ENCODE measurements at regions of chr2 and their contacts with region 1.

Region 1: DNA sequence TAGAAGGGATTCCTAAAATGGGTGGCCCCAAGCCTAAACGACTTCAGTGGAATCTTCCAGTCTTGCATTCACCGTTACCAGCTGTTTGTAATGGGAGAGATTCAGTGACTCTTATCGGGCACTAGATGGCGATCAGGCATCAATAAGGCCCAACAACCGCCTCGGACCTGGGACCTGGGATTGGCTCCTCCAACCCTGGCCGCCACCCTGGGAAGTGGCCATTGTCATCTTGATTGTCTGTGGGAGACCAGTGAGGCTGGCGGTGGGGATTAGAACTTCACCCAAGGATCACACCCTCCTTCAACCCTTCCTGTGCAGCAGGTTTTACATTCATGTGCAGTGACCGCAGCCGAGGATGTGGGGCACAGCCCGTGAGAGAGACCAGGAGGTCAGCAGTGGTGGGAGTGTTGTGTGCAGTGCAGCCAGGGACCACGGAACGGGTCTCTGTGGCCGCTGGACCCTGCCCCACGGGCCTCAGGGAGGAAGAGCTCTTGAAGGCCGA is 85.3 kb downstream of the SPP2 start:
- DNase-seq: peak; percentile 86 to 95 (median 87)
- H3K4me3 ChIP-seq: no peak overlapping the region
- H3K27ac ChIP-seq: no peak overlapping the region
- H3K4me1 ChIP-seq: peaks cover 0 to 3% (median 3%) of the 10 kb centered on the region in 3 donors
- H3K27me3 ChIP-seq: no peaks in the 10 kb centered on the region
- CTCF ChIP-seq: peak; percentile 84

Region 2: GRCh38 chr2:234038076-234038802 is 97.5 kb before region 1 on chr2:
- intact Hi-C with region 1: no loop called
- DNase-seq: no peak
- H3K4me3 ChIP-seq: no peak overlapping the region
- H3K27ac ChIP-seq: no peak overlapping the region
- H3K4me1 ChIP-seq: no peaks in the 10 kb centered on the region
- H3K27me3 ChIP-seq: no peaks in the 10 kb centered on the region
- CTCF ChIP-seq: no peak

Region 3: DNA sequence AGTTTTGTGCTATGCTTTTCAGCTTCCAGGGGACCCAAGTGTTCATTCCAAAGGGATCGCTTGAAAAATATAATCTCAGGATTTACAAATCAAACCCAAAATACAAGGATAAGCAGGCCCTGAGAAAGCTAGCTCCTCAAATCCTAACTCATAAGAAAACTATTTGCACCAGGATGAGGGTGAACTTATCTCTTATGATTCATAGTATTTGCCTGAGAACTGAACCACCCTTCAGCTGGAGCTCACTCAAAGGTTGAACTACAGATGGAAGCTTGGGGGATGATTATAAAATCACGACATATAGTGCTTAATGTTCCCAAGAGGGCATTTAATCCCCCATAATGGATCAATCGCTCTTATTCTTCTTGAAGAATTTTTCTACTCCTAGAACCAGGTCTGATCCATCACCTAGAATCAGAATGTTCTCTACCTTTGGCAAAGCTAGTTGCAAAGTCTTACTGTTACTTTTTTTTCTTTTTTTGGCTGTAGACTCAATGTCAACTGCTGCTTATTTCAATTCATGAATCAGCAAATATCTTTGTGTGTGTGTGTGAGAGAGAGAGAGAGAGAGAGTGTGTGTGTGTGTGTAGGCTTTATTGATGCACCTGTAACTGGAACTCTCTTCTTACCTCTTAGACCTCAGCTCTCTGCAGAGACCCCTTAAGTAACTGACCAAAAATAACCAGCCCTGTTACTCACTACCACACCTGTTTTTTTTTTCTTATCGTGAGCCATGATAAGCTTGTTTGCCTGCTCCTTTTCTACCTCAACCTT is 316.3 kb after region 1 on chr2:
- intact Hi-C with region 1: no loop called
- DNase-seq: no peak
- H3K4me3 ChIP-seq: no peak overlapping the region
- H3K27ac ChIP-seq: no peak overlapping the region
- H3K4me1 ChIP-seq: peaks cover 0 to 2% (median 0%) of the 10 kb centered on the region in 3 donors
- H3K27me3 ChIP-seq: no peaks in the 10 kb centered on the region
- CTCF ChIP-seq: no peak

Region 4: GRCh38 chr2:234500394-234501006 is 364.7 kb after region 1 on chr2:
- intact Hi-C with region 1: loop called (anchors 10 kb)
- DNase-seq: peak; percentile 70 to 90 (median 82)
- H3K4me3 ChIP-seq: no peak overlapping the region
- H3K27ac ChIP-seq: no peak overlapping the region
- H3K4me1 ChIP-seq: peaks cover 0 to 8% (median 3%) of the 10 kb centered on the region in 3 donors
- H3K27me3 ChIP-seq: no peaks in the 10 kb centered on the region
- CTCF ChIP-seq: peak; percentile 55

Region 5: GRCh38 chr2:234690569-234691213 is 554.9 kb after region 1 on chr2:
- intact Hi-C with region 1: no loop called
- DNase-seq: peak in 4 of 5 donors; percentile 39 to 60 (median 58)
- H3K4me3 ChIP-seq: no peak overlapping the region
- H3K27ac ChIP-seq: no peak overlapping the region
- H3K4me1 ChIP-seq: peaks cover 0 to 5% (median 4%) of the 10 kb centered on the region in 3 donors
- H3K27me3 ChIP-seq: no peaks in the 10 kb centered on the region
- CTCF ChIP-seq: no peak